ENCODE measurements at regions of chr1 and their contacts with region 1.

Region 1: GRCh38 chr1:234978397-234979295 is 150.0 kb downstream of the TOMM20 start:
- DNase-seq: peak; percentile 78
- ATAC-seq: peak; percentile 58

Region 2: GRCh38 chr1:234599617-234600417 is 378.8 kb before region 1 on chr1:
- intact Hi-C with region 1: loop called (anchors 10 kb)
- DNase-seq: peak; percentile 91
- ATAC-seq: peak; percentile 81

Region 3: GRCh38 chr1:234722904-234723720 is 255.5 kb before region 1 on chr1:
- intact Hi-C with region 1: loop called (anchors 10 kb)
- DNase-seq: peak; percentile 78
- ATAC-seq: peak; percentile 43